ENCODE measurements at regions of chr20 and their contacts with region 1.

Region 1: DNA sequence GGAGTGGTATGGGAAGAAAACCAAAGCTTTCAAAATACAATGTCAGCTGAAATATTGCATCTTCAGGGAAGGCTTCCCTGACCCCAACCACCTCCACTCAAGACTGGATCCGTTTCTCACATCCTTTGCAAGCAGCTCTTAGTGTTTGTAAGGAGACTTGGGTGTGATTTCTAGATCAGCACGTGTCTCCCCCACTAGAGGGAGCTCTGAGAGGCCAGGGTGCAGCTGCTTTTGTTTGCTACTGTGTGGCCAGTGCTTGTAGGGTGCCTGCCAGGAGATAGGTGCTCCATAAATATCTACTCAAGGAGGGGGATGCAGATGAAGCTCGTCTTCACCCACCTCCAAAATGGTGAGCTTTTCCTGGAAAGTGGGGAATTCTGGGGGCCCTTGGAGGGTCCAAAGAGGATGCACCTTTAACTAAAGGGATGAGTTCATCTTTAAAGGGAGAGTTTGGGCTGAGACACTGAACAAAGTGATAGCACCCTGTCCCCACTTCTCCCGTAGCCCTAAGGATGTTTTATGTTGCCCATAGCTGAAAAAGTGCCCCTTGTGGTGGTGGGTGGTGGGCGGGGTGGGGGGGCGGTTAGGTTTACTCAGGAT is 52.6 kb upstream of the MAFB start:
- DNase-seq: peak; percentile 67 to 72
- H3K4me3 ChIP-seq: no peak overlapping the region
- H3K27ac ChIP-seq: no peak overlapping the region
- H3K4me1 ChIP-seq: no peaks in the 10 kb centered on the region
- H3K27me3 ChIP-seq: peaks cover 0 to 14% (median 0%) of the 10 kb centered on the region in 3 donors
- CTCF ChIP-seq: peak in 5 of 7 experiments; percentile 18 to 50 (median 42)
- EP300 ChIP-seq: no peak
- POLR2A ChIP-seq: no peak

Region 2: DNA sequence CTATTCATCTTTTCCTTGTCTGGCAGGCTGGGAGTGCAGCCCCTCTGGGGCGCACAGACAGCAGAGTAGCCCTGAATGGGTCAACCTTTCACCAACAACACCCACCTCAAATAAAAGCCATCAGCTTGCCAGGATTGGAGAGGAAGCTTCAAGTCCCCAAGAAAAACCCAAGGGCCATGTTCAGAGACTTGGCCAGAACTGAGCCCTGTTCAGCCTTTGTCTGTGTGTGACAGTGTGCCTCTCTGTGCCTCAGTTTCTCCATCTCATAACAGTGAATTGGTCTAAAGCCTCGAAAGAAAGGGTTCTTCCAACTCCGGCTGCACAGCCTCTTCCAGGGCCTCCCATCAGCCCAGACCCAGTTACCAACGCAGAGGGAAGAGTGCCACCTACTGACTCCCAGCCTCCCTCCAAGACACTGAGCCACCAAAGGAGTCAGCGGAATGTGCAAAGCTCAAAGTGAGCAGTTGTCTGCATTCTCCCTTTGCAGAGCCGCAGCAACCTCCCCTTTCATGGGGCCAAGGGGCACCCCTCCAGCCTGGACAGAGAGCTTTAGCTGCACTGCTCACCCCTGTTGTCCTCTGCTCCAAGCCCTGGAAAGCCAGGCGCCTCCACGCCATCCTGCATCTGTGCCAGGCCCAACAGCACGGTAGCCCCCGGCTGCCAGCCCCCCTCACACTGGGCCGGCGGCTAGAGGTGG is 204.3 kb after region 1 on chr20:
- intact Hi-C with region 1: loop called (anchors 10 kb)
- DNase-seq: peak; percentile 48 to 90
- H3K4me3 ChIP-seq: no peak overlapping the region
- H3K27ac ChIP-seq: no peak overlapping the region
- H3K4me1 ChIP-seq: no peaks in the 10 kb centered on the region
- H3K27me3 ChIP-seq: peaks cover 0 to 22% (median 0%) of the 10 kb centered on the region in 3 donors
- CTCF ChIP-seq: peak in 4 of 7 experiments; percentile 15 to 49 (median 22)
- EP300 ChIP-seq: no peak
- POLR2A ChIP-seq: no peak